CD4-positive, alpha-beta T cell (primary cell): ENCODE measurements at regions of chr20 and their contacts with region 1.

Region 1: GRCh38 chr20:62937366-62938104 is 412 bp upstream of the GID8 start:
- DNase-seq: peak; percentile 94 to 98 (median 96)
- ATAC-seq: peak; percentile 88
- H3K4me3 ChIP-seq: peak overlapping the region; percentile 99
- H3K4me3 Mint-ChIP-seq: peak overlapping the region; percentile 96
- H3K27ac ChIP-seq: peak overlapping the region; percentile 84 to 87
- H3K27ac Mint-ChIP-seq: peak overlapping the region; percentile 92
- H3K4me1 ChIP-seq: peaks cover 64% of the 10 kb centered on the region
- H3K4me1 Mint-ChIP-seq: peaks cover 37% of the 10 kb centered on the region
- H3K27me3 ChIP-seq: no peaks in the 10 kb centered on the region
- H3K27me3 Mint-ChIP-seq: no peaks in the 10 kb centered on the region
- CTCF ChIP-seq: no peak

Region 2: DNA sequence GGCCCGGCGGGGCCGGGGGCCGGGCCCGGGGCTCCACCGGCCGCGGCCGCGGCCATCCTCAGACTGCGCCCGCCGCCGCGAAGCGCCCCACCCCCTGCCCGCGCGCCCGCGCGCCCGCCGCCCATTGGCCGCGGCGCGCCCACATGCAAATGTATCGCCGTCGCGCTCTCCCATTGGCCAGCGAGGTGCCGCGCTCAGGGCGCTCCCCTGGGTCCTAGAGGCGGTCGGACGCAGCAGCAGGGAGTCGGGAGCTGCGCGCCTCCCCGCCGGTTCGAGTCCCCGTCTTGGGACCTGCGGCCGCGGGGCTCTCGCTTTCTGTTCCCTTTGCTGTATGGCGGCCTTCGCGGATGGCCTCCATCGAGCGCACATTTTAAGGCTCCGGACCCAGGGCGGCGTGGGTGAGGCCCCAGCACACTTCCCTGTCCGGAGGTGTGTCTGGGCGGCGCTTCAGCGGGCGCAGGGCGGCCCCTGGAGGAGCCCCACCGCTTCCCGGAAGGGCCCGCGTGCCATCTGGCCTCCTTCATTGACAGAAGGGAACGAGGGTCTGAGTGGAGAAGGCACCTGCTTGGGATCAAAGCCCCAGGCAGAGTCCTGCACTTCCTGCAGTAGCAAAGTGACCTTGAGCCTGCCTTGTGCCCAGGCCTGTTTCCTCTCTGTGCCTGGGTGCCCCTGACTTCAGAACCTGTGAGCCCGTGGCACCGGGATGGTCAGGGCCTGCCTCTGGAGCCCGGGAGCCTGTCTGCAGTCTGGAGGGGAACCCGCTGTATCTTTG is 530.1 kb before region 1 on chr20 and contains the start of gene CABLES2:
- CTCF ChIA-PET with region 1: no interaction called
- POLR2A ChIA-PET with region 1: no interaction called
- intact Hi-C with region 1: loop called in 1 of 2 experiments (anchors 5 kb)
- DNase-seq: peak; percentile 83 to 96 (median 88)
- ATAC-seq: peak; percentile 95
- H3K4me3 ChIP-seq: peak within 1 kb of the TSS; percentile 72
- H3K4me3 Mint-ChIP-seq: peak within 1 kb of the TSS; percentile 84
- H3K27ac ChIP-seq: peak within 1 kb of the TSS in 1 of 2 donors; percentile 24
- H3K27ac Mint-ChIP-seq: no peak within 1 kb of the TSS
- H3K4me1 ChIP-seq: peaks cover 46% of the 10 kb centered on the region
- H3K4me1 Mint-ChIP-seq: peaks cover 18% of the 10 kb centered on the region
- H3K27me3 ChIP-seq: no peaks in the 10 kb centered on the region
- H3K27me3 Mint-ChIP-seq: no peaks in the 10 kb centered on the region
- CTCF ChIP-seq: no peak
- total RNA-seq, gene CABLES2: 4.4 TPM

Region 3: DNA sequence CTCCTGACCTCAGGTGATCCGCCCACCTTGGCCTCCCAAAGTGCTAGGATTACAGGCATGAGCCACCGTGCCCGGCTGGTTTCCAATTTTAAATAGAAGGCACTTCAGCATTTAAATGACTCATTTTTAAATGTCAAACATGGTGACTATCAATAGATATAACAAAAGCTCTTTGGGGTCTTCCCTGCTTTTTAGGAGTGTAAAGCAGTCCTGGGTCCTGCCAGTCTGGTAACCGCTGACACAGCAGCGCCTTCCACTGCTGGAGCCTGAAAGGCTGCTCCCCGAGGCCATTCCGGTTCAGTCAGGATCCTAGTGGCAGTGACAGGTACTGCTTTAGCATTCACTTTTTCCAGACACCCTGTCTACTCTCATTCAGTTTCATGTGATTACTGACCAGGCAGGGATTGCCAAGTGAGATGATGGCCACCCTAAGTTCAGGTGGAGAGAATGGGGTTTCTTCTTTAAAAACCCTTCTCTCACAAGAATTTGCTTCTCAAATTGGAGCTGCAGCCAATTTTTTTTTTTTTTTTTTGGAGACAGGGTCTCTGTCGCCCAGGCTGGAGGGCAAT is 16.3 kb before region 1 on chr20:
- CTCF ChIA-PET with region 1: interaction called, 11 read pairs
- POLR2A ChIA-PET with region 1: interaction called, 69 read pairs
- intact Hi-C with region 1: loop called (anchors 1 to 2 kb)
- DNase-seq: peak in 13 of 14 experiments; percentile 32 to 85 (median 51)
- ATAC-seq: peak; percentile 67
- H3K4me3 ChIP-seq: no peak overlapping the region
- H3K4me3 Mint-ChIP-seq: peak overlapping the region; percentile 86
- H3K27ac ChIP-seq: peak overlapping the region; percentile 1 to 29
- H3K27ac Mint-ChIP-seq: peak overlapping the region; percentile 82
- H3K4me1 ChIP-seq: peaks cover 79% of the 10 kb centered on the region
- H3K4me1 Mint-ChIP-seq: peaks cover 89% of the 10 kb centered on the region
- H3K27me3 ChIP-seq: no peaks in the 10 kb centered on the region
- H3K27me3 Mint-ChIP-seq: no peaks in the 10 kb centered on the region
- CTCF ChIP-seq: peak; percentile 66

Region 4: GRCh38 chr20:62953839-62954703 is 16.5 kb after region 1 on chr20:
- CTCF ChIA-PET with region 1: no interaction called
- POLR2A ChIA-PET with region 1: interaction called, 41 read pairs
- intact Hi-C with region 1: loop called (anchors 1 to 2 kb)
- DNase-seq: peak; percentile 48 to 88 (median 68)
- ATAC-seq: peak; percentile 87
- H3K4me3 ChIP-seq: peak overlapping the region; percentile 46
- H3K4me3 Mint-ChIP-seq: peak overlapping the region; percentile 88
- H3K27ac ChIP-seq: peak overlapping the region; percentile 17 to 78
- H3K27ac Mint-ChIP-seq: peak overlapping the region; percentile 90
- H3K4me1 ChIP-seq: peaks cover 49% of the 10 kb centered on the region
- H3K4me1 Mint-ChIP-seq: peaks cover 31% of the 10 kb centered on the region
- H3K27me3 ChIP-seq: no peaks in the 10 kb centered on the region
- H3K27me3 Mint-ChIP-seq: no peaks in the 10 kb centered on the region
- CTCF ChIP-seq: no peak

Region 5: GRCh38 chr20:62965363-62965771 is 27.8 kb after region 1 on chr20:
- CTCF ChIA-PET with region 1: no interaction called
- POLR2A ChIA-PET with region 1: no interaction called
- intact Hi-C with region 1: no loop called
- DNase-seq: no peak
- ATAC-seq: no peak
- H3K4me3 ChIP-seq: no peak overlapping the region
- H3K4me3 Mint-ChIP-seq: no peak overlapping the region
- H3K27ac ChIP-seq: no peak overlapping the region
- H3K27ac Mint-ChIP-seq: no peak overlapping the region
- H3K4me1 ChIP-seq: no peaks in the 10 kb centered on the region
- H3K4me1 Mint-ChIP-seq: no peaks in the 10 kb centered on the region
- H3K27me3 ChIP-seq: no peaks in the 10 kb centered on the region
- H3K27me3 Mint-ChIP-seq: no peaks in the 10 kb centered on the region
- CTCF ChIP-seq: no peak

Region 6: GRCh38 chr20:63272584-63273579 is 335.3 kb after region 1 on chr20 and contains the start of gene ARFGAP1:
- CTCF ChIA-PET with region 1: no interaction called
- POLR2A ChIA-PET with region 1: no interaction called
- intact Hi-C with region 1: loop called in 1 of 2 experiments (anchors 5 kb)
- DNase-seq: peak; percentile 73 to 94 (median 84)
- ATAC-seq: peak; percentile 93
- H3K4me3 ChIP-seq: peak within 1 kb of the TSS; percentile 80
- H3K4me3 Mint-ChIP-seq: peak within 1 kb of the TSS; percentile 90
- H3K27ac ChIP-seq: no peak within 1 kb of the TSS
- H3K27ac Mint-ChIP-seq: peak within 1 kb of the TSS; percentile 82
- H3K4me1 ChIP-seq: peaks cover 26% of the 10 kb centered on the region
- H3K4me1 Mint-ChIP-seq: peaks cover 31% of the 10 kb centered on the region
- H3K27me3 ChIP-seq: no peaks in the 10 kb centered on the region
- H3K27me3 Mint-ChIP-seq: no peaks in the 10 kb centered on the region
- CTCF ChIP-seq: no peak
- total RNA-seq, gene ARFGAP1: 120 TPM